Mucosa of descending colon (tissue), 3 donors: ENCODE measurements at regions of chr20 and their contacts with region 1.

Region 1: DNA sequence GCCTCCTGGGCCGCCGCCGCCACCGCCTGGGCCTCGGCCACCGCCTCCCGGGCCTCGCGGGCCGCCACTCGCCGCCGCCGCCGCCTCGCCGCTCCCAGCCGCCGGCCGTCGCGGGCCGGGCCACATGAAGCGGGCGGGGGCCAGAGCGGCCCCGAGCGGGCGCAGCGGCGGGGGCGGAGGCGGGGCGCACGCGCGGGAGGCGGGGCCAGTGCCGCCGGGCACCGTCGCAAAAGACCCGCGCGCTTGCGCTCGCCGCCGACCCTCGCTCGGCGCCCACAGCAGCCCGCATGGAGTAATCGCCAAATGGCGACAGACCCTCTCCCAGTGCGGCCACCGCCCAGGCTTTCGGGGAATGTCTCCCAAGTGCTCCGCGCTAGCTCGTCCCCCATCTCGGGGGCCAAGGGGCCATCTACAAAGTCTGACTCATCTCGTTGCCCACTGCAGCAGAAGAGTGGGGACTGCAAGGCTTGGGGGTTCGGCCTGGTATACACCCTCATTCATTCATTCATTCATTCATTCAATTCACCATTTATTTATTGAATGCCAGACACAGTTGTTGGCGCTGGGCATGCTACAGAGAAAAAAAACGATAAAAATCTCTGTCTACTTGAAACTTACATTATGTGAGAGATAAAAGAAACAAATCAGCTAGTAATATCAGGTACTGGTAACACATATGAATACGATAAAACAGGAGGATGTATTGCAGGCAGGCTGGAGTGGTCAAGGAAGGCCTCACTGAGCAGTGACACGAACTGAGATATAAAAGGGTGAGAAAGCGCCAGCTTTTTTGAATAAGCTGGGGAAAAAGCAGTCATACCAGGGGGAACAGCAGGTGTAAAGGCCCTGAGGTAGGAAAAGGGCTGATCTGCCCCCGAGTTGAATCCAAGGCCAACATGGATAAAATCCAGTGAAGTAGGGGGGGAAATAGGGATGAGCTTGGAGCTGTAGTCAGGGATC is at the start of gene B4GALT5:
- DNase-seq: peak; percentile 71 to 85 (median 83)
- ATAC-seq: peak; percentile 85
- H3K4me3 ChIP-seq: peak within 1 kb of the TSS; percentile 88
- H3K4me1 ChIP-seq: peaks cover 18% of the 10 kb centered on the region
- CTCF ChIP-seq: no peak
- total RNA-seq, gene B4GALT5: 52.4 to 65.1 (median 60.2) TPM

Region 2: DNA sequence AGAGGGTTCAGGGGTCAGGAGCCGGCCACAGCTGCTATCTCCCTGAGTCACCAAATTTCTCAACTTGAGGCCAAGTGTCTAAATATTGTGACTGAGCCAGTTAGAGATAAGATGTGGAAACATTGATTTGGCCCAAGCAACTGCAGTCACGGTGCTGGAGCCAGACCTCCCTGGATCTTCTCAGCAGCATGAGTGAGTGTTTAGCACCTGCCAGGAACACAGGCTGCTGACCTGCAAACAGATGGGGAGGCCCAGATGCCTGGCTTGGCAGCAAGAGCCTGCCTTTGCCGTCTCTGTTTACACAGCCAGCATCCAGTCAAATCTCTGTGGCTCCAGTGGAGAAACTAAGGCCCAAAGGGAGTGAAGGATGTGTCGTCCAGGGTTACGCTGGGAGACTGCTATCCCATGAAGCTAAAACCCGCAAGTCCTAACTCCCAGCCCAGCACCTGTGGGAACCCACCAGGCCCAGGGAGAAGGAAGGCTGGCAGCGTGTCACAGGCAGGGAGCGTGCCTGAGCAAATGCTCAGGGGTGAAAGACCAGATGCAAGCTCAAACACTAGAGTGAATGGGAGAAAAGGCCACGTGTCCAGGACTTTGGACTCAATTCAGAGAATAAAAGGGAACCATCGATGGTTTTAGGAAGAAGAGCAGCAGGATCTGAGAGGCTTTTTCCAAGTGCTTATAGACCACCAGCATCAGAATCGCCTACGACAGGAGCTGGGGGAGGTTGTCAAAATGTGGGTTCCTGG is 130.2 kb before region 1 on chr20:
- intact Hi-C with region 1: no loop called
- DNase-seq: peak in 2 of 3 donors; percentile 54 to 58
- ATAC-seq: peak; percentile 86
- H3K4me3 ChIP-seq: no peak overlapping the region
- H3K4me1 ChIP-seq: no peaks in the 10 kb centered on the region
- CTCF ChIP-seq: no peak

Region 3: GRCh38 chr20:49631061-49631788 is 82.8 kb before region 1 on chr20:
- intact Hi-C with region 1: loop called in 1 of 2 experiments (anchors 10 kb)
- DNase-seq: no peak
- ATAC-seq: peak; percentile 44
- H3K4me3 ChIP-seq: no peak overlapping the region
- H3K4me1 ChIP-seq: peaks cover 19% of the 10 kb centered on the region
- CTCF ChIP-seq: no peak